ENCODE measurements at regions of chr5 and their contacts with region 1.

Region 1: GRCh38 chr5:170832254-170832653 is 29.6 kb upstream of the RANBP17 start:
- DNase-seq: no peak
- H3K4me3 ChIP-seq: no peak overlapping the region
- H3K27ac ChIP-seq: no peak overlapping the region
- H3K4me1 ChIP-seq: no peaks in the 10 kb centered on the region
- H3K27me3 ChIP-seq: no peaks in the 10 kb centered on the region
- CTCF ChIP-seq: no peak
- EP300 ChIP-seq: no peak
- POLR2A ChIP-seq: no peak

Region 2: GRCh38 chr5:170846416-170846815 is 14.2 kb after region 1 on chr5:
- in situ Hi-C with region 1: no loop called
- intact Hi-C with region 1: loop called (anchors 1 kb)
- DNase-seq: no peak
- H3K4me3 ChIP-seq: no peak overlapping the region
- H3K27ac ChIP-seq: no peak overlapping the region
- H3K4me1 ChIP-seq: no peaks in the 10 kb centered on the region
- H3K27me3 ChIP-seq: no peaks in the 10 kb centered on the region
- CTCF ChIP-seq: no peak
- EP300 ChIP-seq: no peak
- POLR2A ChIP-seq: no peak

Region 3: DNA sequence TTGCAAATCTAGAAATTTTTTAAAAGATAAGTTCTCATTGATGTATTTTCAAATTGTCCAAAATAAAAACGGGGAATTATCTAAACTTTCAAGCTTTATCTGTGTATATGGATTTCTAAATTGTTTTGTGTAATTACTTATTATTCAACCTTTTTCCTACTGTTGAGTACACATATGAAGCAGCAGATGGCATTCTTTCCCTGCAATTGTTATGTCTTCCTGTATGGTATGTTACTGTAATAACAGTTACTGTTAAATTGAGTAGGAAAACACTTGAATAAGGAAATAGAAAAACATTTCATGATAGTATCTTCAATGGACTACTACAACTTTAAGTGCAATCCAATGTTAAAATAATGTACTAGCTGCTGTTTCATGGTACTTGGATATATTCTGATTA is 154.3 kb after region 1 on chr5:
- in situ Hi-C with region 1: no loop called
- intact Hi-C with region 1: no loop called
- DNase-seq: no peak
- H3K4me3 ChIP-seq: no peak overlapping the region
- H3K27ac ChIP-seq: no peak overlapping the region
- H3K4me1 ChIP-seq: no peaks in the 10 kb centered on the region
- H3K27me3 ChIP-seq: no peaks in the 10 kb centered on the region
- CTCF ChIP-seq: no peak
- EP300 ChIP-seq: no peak
- POLR2A ChIP-seq: no peak

Measured in transverse colon (tissue), 4 donors.